ENCODE measurements at regions of chr19 and their contacts with region 1.

Region 1: GRCh38 chr19:41570639-41571112 is 5.3 kb upstream of the CEACAM21 start:
- DNase-seq: peak; percentile 85 to 90
- ATAC-seq: peak; percentile 90 to 99
- H3K4me3 ChIP-seq: no peak overlapping the region
- H3K27ac ChIP-seq: no peak overlapping the region
- H3K4me1 ChIP-seq: no peaks in the 10 kb centered on the region; the same call in 2 of the 3 replicates
- CTCF ChIP-seq: peak; percentile 99
- EP300 ChIP-seq: no peak
- POLR2A ChIP-seq: no peak
- RAD21 ChIP-seq: peak; percentile 96 to 99

Region 2: GRCh38 chr19:41321600-41322270 is 248.9 kb before region 1 on chr19:
- CTCF ChIA-PET with region 1: interaction called, 33 read pairs
- POLR2A ChIA-PET with region 1: interaction called, 4 read pairs
- DNase-seq: peak; percentile 76 to 95
- ATAC-seq: peak; percentile 10 to 53; a peak in 3 of 6 replicates
- H3K4me3 ChIP-seq: no peak overlapping the region
- H3K27ac ChIP-seq: peak overlapping the region; percentile 81 to 91; a peak in 5 of 6 replicates
- H3K4me1 ChIP-seq: peaks cover 56% of the 10 kb centered on the region
- CTCF ChIP-seq: peak; percentile 88
- EP300 ChIP-seq: no peak
- POLR2A ChIP-seq: no peak
- RAD21 ChIP-seq: peak; percentile 61 to 62; a peak in 4 of 5 replicates

Region 3: GRCh38 chr19:41439441-41440222 is 131.0 kb before region 1 on chr19 and contains the start of gene DMAC2:
- CTCF ChIA-PET with region 1: interaction called, 1,358 read pairs
- POLR2A ChIA-PET with region 1: interaction called, 5 read pairs
- DNase-seq: peak; percentile 100
- ATAC-seq: peak; percentile 96 to 99
- H3K4me3 ChIP-seq: peak within 1 kb of the TSS; percentile 52
- H3K27ac ChIP-seq: peak within 1 kb of the TSS; percentile 81 to 86
- H3K4me1 ChIP-seq: peaks cover 13% of the 10 kb centered on the region; the same call in 2 of the 3 replicates
- CTCF ChIP-seq: peak; percentile 85
- EP300 ChIP-seq: no peak; a peak in 1 of 5 replicates
- POLR2A ChIP-seq: peak; percentile 80
- RAD21 ChIP-seq: peak; percentile 38 to 51; a peak in 2 of 5 replicates
- polyA plus RNA-seq, gene DMAC2: 128 and 132 TPM in 2 replicates

Region 4: DNA sequence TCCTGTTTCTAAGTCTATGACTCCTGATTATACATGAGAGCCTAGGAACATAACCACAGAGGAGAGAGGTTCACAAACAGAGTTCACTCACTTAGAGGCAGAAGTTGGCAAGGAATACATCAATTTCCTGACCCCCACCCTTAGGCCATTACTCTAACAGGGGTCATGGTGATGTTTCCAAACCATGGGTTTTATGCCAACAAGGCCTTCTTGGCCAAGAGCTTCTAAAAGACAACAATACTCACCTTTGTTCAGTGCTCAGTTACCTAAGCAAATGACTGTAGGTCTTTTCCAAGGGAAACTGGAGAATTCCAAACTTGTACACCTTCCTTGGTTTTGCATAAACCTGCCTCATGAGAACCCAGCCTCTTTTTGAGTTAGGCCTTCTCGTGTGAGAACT is 75.1 kb before region 1 on chr19:
- CTCF ChIA-PET with region 1: interaction called, 10 read pairs
- POLR2A ChIA-PET with region 1: no interaction called
- DNase-seq: no peak
- ATAC-seq: no peak
- H3K4me3 ChIP-seq: no peak overlapping the region
- H3K27ac ChIP-seq: no peak overlapping the region
- H3K4me1 ChIP-seq: peaks cover 3% of the 10 kb centered on the region
- CTCF ChIP-seq: no peak
- EP300 ChIP-seq: no peak
- POLR2A ChIP-seq: no peak
- RAD21 ChIP-seq: no peak

Region 5: DNA sequence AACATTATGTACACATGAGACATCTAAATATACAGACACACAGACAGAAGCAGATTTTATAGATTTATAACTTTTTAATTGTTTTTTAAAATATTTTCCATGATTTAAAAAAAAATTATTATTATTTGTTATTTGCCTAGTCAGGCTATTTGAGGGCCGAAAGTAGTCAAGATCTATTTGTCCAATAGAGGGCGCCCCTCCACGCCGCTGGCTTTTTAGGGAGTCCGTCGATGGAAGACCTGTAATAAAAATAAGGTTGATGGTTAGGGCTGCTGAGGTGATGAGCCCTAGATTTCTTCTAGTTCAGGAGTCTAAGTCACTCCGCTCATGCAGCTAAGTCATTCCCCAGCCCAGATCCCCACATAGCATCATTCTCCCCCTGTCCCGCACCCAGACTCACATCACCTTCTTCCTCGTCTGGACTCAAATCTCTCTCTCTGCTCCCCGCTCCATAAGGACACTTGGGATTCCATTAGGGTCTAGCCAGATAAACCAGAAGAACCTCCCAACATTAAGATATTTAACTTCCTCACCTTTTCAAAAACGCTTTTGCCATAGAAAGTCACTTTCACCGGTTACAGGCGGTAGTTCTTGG is 28.6 kb before region 1 on chr19:
- CTCF ChIA-PET with region 1: interaction called, 67 read pairs
- POLR2A ChIA-PET with region 1: no interaction called
- DNase-seq: peak; percentile 69 to 73
- ATAC-seq: peak; percentile 44 to 69; a peak in 4 of 6 replicates
- H3K4me3 ChIP-seq: no peak overlapping the region
- H3K27ac ChIP-seq: no peak overlapping the region
- H3K4me1 ChIP-seq: no peaks in the 10 kb centered on the region
- CTCF ChIP-seq: peak; percentile 88
- EP300 ChIP-seq: no peak
- POLR2A ChIP-seq: no peak
- RAD21 ChIP-seq: peak; percentile 33 to 54; a peak in 4 of 5 replicates

Region 6: GRCh38 chr19:41597600-41598041 is 26.9 kb after region 1 on chr19:
- CTCF ChIA-PET with region 1: interaction called, 1,153 read pairs
- POLR2A ChIA-PET with region 1: no interaction called
- DNase-seq: peak; percentile 85 to 99
- ATAC-seq: peak; percentile 70 to 90; a peak in 5 of 6 replicates
- H3K4me3 ChIP-seq: no peak overlapping the region
- H3K27ac ChIP-seq: no peak overlapping the region
- H3K4me1 ChIP-seq: no peaks in the 10 kb centered on the region
- CTCF ChIP-seq: peak; percentile 99
- EP300 ChIP-seq: no peak
- POLR2A ChIP-seq: no peak
- RAD21 ChIP-seq: peak; percentile 44 to 54; a peak in 3 of 5 replicates